Panc1 (cell line): ENCODE measurements at regions of chr22 and their contacts with region 1.

Region 1: DNA sequence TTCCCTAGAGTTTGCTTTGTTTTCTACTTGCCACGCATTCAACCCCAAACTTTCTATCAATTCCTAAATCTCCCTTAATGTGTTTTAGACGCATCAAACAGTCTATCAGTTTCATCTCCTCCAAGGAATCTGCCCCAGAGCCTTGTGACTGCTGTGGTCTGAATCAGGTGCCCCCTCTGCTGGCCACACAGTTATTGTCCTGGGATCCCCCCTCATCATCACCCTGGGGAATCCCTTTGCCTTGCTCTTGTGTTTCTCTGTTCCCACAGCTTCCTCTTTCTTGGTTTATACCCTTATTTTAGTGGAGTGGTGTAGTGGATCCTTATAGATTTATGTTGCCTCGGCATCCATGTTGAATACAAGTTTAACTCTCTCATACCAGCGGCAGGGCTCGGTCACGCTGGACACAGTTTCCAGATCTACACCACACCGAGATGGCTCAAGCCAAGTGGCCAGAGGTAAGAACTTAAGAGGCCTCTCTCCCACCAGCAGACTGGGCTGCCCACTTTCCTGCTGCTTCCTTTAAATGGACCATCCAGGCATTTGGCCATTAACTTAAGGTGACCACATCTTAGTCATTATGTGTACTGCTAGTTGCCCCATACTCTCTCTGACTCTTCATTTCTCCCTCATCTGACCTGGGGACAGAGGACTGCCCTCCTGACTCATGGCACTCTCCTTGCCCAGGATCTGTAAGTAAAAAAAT is 8.2 kb downstream of the UPB1 start:
- DNase-seq: no peak
- ATAC-seq: peak; percentile 84
- H3K4me3 ChIP-seq: no peak overlapping the region
- H3K27ac ChIP-seq: no peak overlapping the region
- H3K4me1 ChIP-seq: 0 out of 2 replicates have a peak, but pooled peaks cover 2% of the 10 kb centered on the region
- H3K27me3 ChIP-seq: no peaks in the 10 kb centered on the region
- CTCF ChIP-seq: peak; percentile 78

Region 2: GRCh38 chr22:24423519-24424000 is 79.7 kb before region 1 on chr22:
- CTCF ChIA-PET with region 1: interaction called, 4 read pairs
- POLR2A ChIA-PET with region 1: no interaction called
- in situ Hi-C with region 1: no loop called
- intact Hi-C with region 1: loop called (anchors 5 kb)
- DNase-seq: no peak
- ATAC-seq: peak; percentile 80
- H3K4me3 ChIP-seq: peak overlapping the region; percentile 39 to 49
- H3K27ac ChIP-seq: no peak overlapping the region
- H3K4me1 ChIP-seq: peaks cover 14% of the 10 kb centered on the region
- H3K27me3 ChIP-seq: no peaks in the 10 kb centered on the region
- CTCF ChIP-seq: peak; percentile 96

Region 3: DNA sequence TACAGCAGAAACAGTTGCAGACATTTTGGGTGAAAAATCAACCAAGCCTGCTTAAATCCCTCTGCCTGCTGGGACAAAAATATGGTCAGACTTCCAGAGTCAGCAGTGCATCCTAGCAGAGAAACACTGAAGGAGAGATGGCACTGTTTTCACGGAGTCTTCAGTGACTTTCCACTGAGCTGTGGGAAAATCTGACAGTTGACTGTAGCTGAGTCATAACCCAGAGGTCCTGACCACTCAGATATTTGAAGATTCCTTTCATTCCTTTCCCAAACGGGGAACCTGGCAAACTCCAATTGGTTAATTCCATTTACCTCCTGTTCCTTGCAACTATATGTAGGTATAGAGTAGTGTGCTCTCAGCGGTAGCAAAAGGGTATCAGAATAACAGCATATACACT is 29.1 kb before region 1 on chr22:
- CTCF ChIA-PET with region 1: no interaction called
- POLR2A ChIA-PET with region 1: no interaction called
- in situ Hi-C with region 1: no loop called
- intact Hi-C with region 1: no loop called
- DNase-seq: no peak
- ATAC-seq: peak; percentile 92
- H3K4me3 ChIP-seq: no peak overlapping the region
- H3K27ac ChIP-seq: peak overlapping the region; percentile 63; the same call in 1 of the 2 replicates
- H3K4me1 ChIP-seq: no peaks in the 10 kb centered on the region; the same call in 1 of the 2 replicates
- H3K27me3 ChIP-seq: no peaks in the 10 kb centered on the region
- CTCF ChIP-seq: no peak

Region 4: DNA sequence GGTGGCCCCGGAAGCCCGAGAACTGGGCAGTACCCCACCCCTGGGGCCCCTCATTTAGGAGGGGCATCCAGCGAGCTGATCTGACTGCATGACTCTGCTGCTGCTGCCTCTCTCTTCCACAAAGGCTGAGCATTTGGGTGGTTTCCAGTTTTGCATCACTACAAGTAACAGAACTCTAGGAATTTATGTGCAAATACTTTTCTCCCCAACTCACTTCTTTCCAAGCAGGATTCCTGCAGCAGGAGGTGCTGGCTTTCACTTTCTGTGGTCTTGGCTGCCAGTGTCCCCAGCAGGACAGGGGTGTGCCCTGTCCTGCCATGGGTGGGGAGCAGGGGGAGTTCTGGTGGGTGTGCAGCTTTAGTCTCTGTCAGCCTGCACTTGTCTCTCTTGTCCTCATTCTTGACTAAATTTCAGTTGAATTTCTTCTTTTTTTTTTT is 13.0 kb after region 1 on chr22:
- CTCF ChIA-PET with region 1: interaction called, 12 read pairs
- POLR2A ChIA-PET with region 1: no interaction called
- in situ Hi-C with region 1: no loop called
- intact Hi-C with region 1: no loop called
- DNase-seq: no peak
- ATAC-seq: peak; percentile 72
- H3K4me3 ChIP-seq: no peak overlapping the region
- H3K27ac ChIP-seq: no peak overlapping the region
- H3K4me1 ChIP-seq: peaks cover 3% of the 10 kb centered on the region; the same call in 1 of the 2 replicates
- H3K27me3 ChIP-seq: no peaks in the 10 kb centered on the region
- CTCF ChIP-seq: no peak

Region 5: DNA sequence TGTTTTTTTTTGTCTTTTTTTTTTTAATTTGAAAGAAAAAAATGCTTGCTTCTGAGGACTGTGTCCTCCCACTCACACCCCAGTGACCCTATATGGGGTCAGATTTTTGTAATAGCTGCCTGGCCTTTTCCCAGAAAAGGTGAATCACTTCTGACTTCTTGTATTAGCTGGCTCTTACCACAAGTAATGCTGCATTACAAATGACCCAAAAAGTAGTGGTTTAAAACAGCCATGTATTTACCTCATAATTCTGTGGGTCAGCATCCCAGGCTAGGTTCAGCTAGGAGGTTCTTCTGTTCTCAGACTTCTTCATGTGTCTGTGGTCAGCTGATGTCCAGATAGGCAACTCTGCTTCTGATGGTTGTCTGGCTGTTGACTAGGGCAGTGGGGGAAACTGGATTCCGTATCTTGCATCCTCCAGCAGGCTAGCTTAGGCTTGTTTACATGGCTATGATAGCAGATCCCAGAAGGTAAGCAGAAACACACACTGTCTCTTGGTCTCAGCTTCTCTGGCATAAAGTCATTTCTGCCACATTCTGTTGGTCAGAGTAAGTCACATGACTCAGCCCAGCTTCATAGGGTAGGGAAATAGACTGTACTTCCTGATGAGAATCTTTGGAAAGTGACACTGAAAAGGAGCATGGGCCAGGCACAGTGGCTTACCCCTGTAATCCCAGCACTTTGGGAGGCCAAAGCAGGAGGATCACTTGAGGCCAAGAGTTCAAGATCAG is 423.7 kb after region 1 on chr22:
- CTCF ChIA-PET with region 1: no interaction called
- POLR2A ChIA-PET with region 1: no interaction called
- in situ Hi-C with region 1: no loop called
- intact Hi-C with region 1: no loop called
- DNase-seq: no peak
- ATAC-seq: no peak
- H3K4me3 ChIP-seq: no peak overlapping the region
- H3K27ac ChIP-seq: no peak overlapping the region
- H3K4me1 ChIP-seq: no peaks in the 10 kb centered on the region
- H3K27me3 ChIP-seq: no peaks in the 10 kb centered on the region
- CTCF ChIP-seq: no peak